ENCODE measurements at regions of chr14 and their contacts with region 1.

Region 1: DNA sequence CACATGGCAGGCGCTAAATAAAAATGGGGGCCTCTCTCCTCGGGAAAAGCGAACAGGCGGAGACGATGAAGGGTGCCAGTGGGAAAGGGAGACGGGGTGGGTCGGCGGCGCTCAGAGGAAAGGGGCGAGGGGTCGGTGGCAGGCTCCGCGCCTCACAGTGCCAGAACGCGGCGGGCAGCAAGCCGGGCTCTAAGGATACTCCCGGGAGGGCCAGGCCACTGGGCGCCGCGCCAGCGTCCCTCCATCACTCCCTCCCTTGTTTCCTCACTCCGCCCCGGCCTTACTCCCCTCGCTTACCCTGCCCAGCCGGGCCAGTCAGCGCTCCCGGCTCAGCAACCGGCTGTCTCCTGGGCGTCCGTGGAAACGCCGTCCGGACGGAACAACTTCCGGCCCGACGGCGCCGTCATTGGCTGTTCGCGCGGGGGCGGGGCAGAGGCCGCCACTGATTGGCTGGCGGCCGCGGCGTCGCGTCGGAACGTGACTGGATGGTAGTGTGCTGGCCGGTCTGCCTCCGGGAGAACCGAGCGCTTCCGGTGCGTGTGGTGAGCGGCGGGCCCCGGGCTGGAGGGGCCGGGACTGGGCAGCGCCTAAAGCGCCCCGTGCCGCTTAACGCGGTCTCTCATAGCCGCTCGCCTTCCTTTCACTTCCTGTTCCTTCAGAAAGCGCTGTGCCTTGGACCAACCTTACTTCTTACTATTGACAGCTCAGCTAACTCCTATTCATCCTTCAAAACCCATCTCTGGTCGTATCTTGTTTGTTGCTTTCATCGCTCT is 53.0 kb downstream of the SLC25A47 start:
- DNase-seq: peak; percentile 99
- H3K4me3 Mint-ChIP-seq: peak within 1 kb of the TSS; percentile 99
- H3K27ac Mint-ChIP-seq: peak within 1 kb of the TSS; percentile 98
- H3K4me1 Mint-ChIP-seq: peaks cover 47% of the 10 kb centered on the region
- H3K27me3 Mint-ChIP-seq: no peaks in the 10 kb centered on the region

Region 2: GRCh38 chr14:100108042-100108825 is 267.9 kb before region 1 on chr14:
- intact Hi-C with region 1: loop called (anchors 10 kb)
- DNase-seq: peak; percentile 95
- H3K4me3 Mint-ChIP-seq: peak overlapping the region; percentile 40
- H3K27ac Mint-ChIP-seq: peak overlapping the region; percentile 86
- H3K4me1 Mint-ChIP-seq: peaks cover 66% of the 10 kb centered on the region
- H3K27me3 Mint-ChIP-seq: no peaks in the 10 kb centered on the region

Region 3: GRCh38 chr14:100271247-100271939 is 104.8 kb before region 1 on chr14:
- intact Hi-C with region 1: no loop called
- DNase-seq: no peak
- H3K4me3 Mint-ChIP-seq: no peak overlapping the region
- H3K27ac Mint-ChIP-seq: no peak overlapping the region
- H3K4me1 Mint-ChIP-seq: peaks cover 29% of the 10 kb centered on the region
- H3K27me3 Mint-ChIP-seq: no peaks in the 10 kb centered on the region

Region 4: DNA sequence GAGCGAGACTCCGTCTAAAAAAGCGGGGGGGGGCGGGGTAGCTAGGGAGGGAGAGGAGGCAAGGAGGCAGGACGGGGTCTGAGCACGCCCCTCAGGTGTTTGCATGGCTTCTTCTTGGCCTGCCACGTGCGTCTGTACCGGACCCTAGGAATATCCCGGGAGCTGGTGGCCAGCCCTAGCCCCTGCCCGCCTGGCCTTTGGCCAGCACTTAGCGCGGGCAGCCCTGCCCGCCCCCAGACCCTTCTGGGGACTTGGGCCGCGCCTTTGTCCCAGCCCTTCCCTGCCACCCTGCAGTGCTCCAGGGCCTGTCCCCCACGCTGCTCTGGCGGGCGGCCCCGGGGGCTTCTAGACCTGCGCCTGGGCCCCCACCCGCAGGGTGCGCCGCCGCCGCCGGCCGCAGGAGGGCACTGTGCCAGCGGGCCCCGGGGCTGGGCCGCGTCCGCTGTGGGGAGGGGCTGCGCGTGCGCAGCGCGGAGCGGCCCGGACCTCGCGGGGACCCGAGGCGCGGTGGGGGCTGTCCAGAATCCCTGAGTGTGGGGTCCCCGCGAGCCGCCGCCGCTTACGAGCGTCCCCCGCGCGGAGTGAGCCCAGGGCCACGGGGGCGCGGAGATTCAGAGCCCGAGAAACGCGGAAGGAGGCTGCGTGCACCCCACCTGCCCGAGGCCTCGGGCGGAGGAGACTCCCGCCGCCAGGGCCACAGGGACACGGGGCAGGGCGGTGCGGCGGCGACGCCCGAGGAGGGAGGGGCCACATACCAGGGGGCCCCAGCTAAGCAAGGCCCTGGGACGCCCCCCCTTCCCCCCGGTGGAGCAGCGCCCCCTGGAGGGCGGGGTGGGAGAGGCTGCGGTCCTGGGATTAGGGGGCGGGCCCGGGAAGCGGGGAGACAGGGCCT is 90.9 kb before region 1 on chr14:
- intact Hi-C with region 1: loop called (anchors 1 kb)
- DNase-seq: peak; percentile 95
- H3K4me3 Mint-ChIP-seq: peak overlapping the region; percentile 80
- H3K27ac Mint-ChIP-seq: no peak overlapping the region
- H3K4me1 Mint-ChIP-seq: peaks cover 10% of the 10 kb centered on the region
- H3K27me3 Mint-ChIP-seq: no peaks in the 10 kb centered on the region

Region 5: DNA sequence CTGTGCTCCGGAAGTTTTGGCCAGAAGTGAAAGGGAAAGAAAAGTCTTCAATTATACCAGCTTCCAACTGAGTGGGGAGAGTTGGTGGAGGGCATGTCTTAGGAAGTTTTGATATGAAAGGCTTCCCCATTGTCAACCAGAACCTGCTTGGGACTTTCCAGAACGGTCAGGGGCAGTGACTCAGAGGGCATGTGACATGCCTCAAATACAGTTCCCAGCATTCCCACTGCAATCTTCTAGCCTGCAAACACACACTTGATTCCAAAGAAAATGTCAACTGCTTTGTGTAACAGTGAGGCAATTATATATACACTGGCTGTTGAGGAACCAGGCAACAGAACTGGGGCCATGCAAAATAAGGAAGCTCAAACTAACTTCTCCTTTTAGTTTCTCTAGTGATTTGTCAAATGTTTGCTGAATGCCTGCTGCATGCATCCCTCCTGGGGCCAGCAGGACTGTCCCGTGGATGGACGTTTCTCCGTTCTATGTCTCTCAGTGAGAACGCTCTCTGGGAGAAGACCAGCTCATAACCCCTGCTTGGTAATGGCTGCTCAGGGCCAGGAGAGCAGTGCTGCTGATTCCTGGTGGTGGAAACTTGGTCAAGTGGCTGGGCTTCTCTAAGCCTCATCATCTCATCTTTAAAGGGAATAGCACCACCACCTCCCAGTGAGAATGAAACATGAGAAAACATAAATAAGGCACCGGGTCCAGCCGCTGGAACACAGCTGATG is 34.7 kb before region 1 on chr14:
- intact Hi-C with region 1: loop called (anchors 1 kb)
- DNase-seq: peak; percentile 70
- H3K4me3 Mint-ChIP-seq: peak overlapping the region; percentile 14
- H3K27ac Mint-ChIP-seq: peak overlapping the region; percentile 88
- H3K4me1 Mint-ChIP-seq: peaks cover 25% of the 10 kb centered on the region
- H3K27me3 Mint-ChIP-seq: no peaks in the 10 kb centered on the region

Region 6: DNA sequence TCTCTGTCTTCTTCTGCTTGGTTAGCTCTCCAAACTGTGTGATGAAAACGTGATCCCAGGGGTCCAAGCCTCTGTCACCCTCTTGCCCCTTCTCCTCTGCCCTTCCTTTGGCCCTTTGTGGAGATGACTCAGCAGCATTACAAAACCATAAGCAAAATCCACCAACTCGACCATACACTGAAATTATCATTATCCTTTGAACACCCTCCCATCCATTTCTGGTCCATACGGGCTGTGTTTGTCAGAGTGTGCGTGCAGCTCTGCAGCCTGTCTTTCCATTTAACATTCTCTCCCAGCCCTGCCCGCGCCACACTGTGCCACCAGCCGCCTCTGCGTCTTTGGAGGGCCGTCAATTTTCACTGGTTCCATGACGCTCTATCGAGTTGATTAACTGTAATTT is 16.2 kb after region 1 on chr14:
- intact Hi-C with region 1: no loop called
- DNase-seq: no peak
- H3K4me3 Mint-ChIP-seq: no peak overlapping the region
- H3K27ac Mint-ChIP-seq: no peak overlapping the region
- H3K4me1 Mint-ChIP-seq: peaks cover 16% of the 10 kb centered on the region
- H3K27me3 Mint-ChIP-seq: no peaks in the 10 kb centered on the region

Region 7: GRCh38 chr14:102086972-102087761 is 1711.0 kb after region 1 on chr14 and contains the start of gene HSP90AA1:
- intact Hi-C with region 1: loop called (anchors 10 kb)
- DNase-seq: peak; percentile 98
- H3K4me3 Mint-ChIP-seq: peak within 1 kb of the TSS; percentile 92
- H3K27ac Mint-ChIP-seq: peak within 1 kb of the TSS; percentile 98
- H3K4me1 Mint-ChIP-seq: peaks cover 59% of the 10 kb centered on the region
- H3K27me3 Mint-ChIP-seq: no peaks in the 10 kb centered on the region
- total RNA-seq, gene HSP90AA1: 1,216 and 1,268 TPM in 2 replicates